ENCODE measurements at regions of chr9 and their contacts with region 1.

Region 1: GRCh38 chr9:123863164-123863855 is 66.6 kb downstream of the DENND1A start:
- DNase-seq: peak in 1 of 2 experiments; percentile 98
- H3K4me3 ChIP-seq: no peak overlapping the region
- H3K4me1 ChIP-seq: peaks cover 37% of the 10 kb centered on the region
- H3K27me3 ChIP-seq: peaks cover 60% of the 10 kb centered on the region

Region 2: GRCh38 chr9:124008694-124009530 is 145.6 kb after region 1 on chr9:
- in situ Hi-C with region 1: loop called (anchors 10 kb)
- DNase-seq: peak; percentile 8 to 56
- H3K4me3 ChIP-seq: peak overlapping the region; percentile 26
- H3K4me1 ChIP-seq: peaks cover 18% of the 10 kb centered on the region
- H3K27me3 ChIP-seq: peaks cover 57% of the 10 kb centered on the region